Vagina (tissue), 2 donors: ENCODE measurements at regions of chr11 and their contacts with region 1.

Region 1: GRCh38 chr11:8717876-8718753 is 35.5 kb downstream of the RPL27A start:
- DNase-seq: no peak
- H3K4me3 ChIP-seq: no peak overlapping the region
- H3K27ac ChIP-seq: peak overlapping the region; percentile 91
- H3K4me1 ChIP-seq: peaks cover 98% of the 10 kb centered on the region
- H3K27me3 ChIP-seq: no peaks in the 10 kb centered on the region
- CTCF ChIP-seq: no peak
- POLR2A ChIP-seq: no peak

Region 2: GRCh38 chr11:8759634-8760033 is 41.5 kb after region 1 on chr11:
- intact Hi-C with region 1: loop called (anchors 5 kb)
- DNase-seq: no peak
- H3K4me3 ChIP-seq: no peak overlapping the region
- H3K27ac ChIP-seq: peak overlapping the region; percentile 42
- H3K4me1 ChIP-seq: peaks cover 57% of the 10 kb centered on the region
- H3K27me3 ChIP-seq: no peaks in the 10 kb centered on the region
- CTCF ChIP-seq: no peak
- POLR2A ChIP-seq: no peak

Region 3: DNA sequence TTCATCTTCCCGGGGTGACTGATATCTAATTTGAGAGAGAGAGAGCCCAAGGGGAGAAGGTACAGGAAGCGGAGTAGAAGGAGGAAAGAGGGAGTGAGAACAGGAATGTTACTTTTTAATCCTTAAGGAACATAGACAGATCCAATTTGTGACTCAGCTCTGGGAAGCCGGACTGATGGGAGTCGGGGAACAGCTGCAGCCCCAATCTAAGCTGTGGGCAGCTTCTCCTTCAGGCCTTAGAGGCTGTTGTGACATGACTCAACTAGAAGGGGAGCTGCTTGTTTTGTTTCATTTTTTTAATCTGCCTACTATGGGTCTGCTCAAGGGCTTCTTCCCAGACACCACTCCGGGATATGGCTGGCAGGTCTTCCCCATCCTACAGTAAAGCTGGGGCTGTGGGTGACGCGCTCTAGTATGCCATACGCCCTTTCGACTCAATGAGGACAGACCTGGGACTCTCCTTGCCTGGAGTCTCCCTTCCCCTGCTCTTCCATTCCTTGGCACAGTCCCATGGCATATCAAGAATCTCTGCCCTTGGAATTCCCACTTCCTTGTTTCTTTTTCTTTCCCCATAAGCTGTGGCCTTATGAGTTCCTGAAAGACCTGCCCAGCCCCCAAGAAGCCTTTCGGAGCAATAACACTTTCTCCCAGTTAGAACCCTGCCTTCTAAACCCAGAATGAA is 89.6 kb after region 1 on chr11:
- intact Hi-C with region 1: loop called (anchors 5 kb)
- DNase-seq: no peak
- H3K4me3 ChIP-seq: peak overlapping the region; percentile 56 to 59
- H3K27ac ChIP-seq: peak overlapping the region; percentile 90
- H3K4me1 ChIP-seq: peaks cover 64% of the 10 kb centered on the region
- H3K27me3 ChIP-seq: no peaks in the 10 kb centered on the region
- CTCF ChIP-seq: no peak
- POLR2A ChIP-seq: no peak